ENCODE measurements at regions of chr15 and their contacts with region 1.

Region 1: DNA sequence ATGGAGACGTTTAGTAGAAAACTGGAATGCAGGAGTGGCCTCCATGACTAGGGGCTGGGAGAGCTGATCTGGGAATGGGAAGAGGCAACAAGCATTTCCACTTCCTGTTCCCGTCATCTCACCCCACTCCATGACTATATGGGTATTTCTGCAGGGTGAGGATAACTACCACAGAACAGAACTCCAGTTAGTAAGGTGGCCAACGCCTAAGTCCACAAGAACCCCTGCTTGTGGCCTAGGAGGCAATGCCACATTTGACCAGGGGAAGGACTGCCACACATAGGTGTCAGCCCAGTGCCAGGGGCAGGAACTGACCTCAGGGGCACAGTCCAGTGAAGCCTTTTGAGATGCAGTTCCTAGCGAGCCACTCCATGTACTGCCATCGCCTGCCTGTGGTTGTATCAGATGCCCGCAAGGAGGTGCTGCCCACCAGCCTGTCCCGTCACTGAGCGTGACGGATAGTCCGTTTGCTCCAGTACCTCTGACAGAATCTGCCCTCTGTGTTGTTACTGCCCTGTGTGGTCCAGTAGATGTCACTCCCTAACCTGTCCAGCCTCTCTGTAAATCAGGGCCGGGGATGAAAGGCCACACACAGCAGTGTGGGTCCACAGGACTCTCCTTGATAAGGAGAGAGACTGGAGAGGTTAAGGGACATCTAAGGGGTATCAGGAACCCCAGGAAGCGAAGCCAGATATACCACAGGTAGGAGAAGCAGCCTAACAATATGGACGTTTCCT is 3.5 kb upstream of the MTFMT start:
- DNase-seq: peak; percentile 73
- H3K4me3 Mint-ChIP-seq: no peak overlapping the region
- H3K27ac Mint-ChIP-seq: no peak overlapping the region
- H3K4me1 Mint-ChIP-seq: peaks cover 17% of the 10 kb centered on the region
- H3K27me3 Mint-ChIP-seq: peaks cover 13% of the 10 kb centered on the region
- CTCF ChIP-seq: peak; percentile 51

Region 2: DNA sequence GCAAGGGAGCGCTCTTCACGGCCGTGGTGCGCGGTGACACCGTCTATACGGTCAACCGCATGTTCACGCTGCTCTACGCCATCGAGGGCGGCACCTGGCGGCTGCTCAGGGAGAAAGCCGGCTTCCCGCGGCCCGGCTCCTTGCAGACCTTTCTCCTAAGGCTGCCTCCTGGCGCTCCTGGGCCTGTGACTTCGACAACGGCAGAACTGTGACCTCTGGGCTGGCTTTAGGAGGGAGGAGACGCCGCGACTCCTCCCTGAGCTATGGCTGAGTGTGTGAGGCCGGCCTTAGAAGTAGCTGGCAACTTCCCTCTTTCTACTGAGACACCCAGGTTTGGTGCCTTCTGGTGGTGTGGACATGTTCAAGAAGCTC is 45.0 kb after region 1 on chr15:
- CTCF ChIA-PET with region 1: interaction called, 6 read pairs
- intact Hi-C with region 1: loop called (anchors 2 kb)
- DNase-seq: peak; percentile 84
- H3K4me3 Mint-ChIP-seq: no peak overlapping the region
- H3K27ac Mint-ChIP-seq: no peak overlapping the region
- H3K4me1 Mint-ChIP-seq: peaks cover 11% of the 10 kb centered on the region
- H3K27me3 Mint-ChIP-seq: peaks cover 29% of the 10 kb centered on the region
- CTCF ChIP-seq: peak; percentile 73

Region 3: GRCh38 chr15:65094294-65094995 is 61.5 kb after region 1 on chr15:
- CTCF ChIA-PET with region 1: no interaction called
- intact Hi-C with region 1: no loop called
- DNase-seq: no peak
- H3K4me3 Mint-ChIP-seq: no peak overlapping the region
- H3K27ac Mint-ChIP-seq: no peak overlapping the region
- H3K4me1 Mint-ChIP-seq: peaks cover under 1% of the 10 kb centered on the region
- H3K27me3 Mint-ChIP-seq: no peaks in the 10 kb centered on the region
- CTCF ChIP-seq: no peak

Region 4: GRCh38 chr15:65292938-65293518 is 260.1 kb after region 1 on chr15:
- CTCF ChIA-PET with region 1: interaction called, 3 read pairs
- intact Hi-C with region 1: loop called (anchors 10 kb)
- DNase-seq: no peak
- H3K4me3 Mint-ChIP-seq: no peak overlapping the region
- H3K27ac Mint-ChIP-seq: no peak overlapping the region
- H3K4me1 Mint-ChIP-seq: peaks cover 7% of the 10 kb centered on the region
- H3K27me3 Mint-ChIP-seq: no peaks in the 10 kb centered on the region
- CTCF ChIP-seq: no peak

Measured in Calu3 (cell line).